PC-3 (cell line): ENCODE measurements at regions of chr3 and their contacts with region 1.

Region 1: DNA sequence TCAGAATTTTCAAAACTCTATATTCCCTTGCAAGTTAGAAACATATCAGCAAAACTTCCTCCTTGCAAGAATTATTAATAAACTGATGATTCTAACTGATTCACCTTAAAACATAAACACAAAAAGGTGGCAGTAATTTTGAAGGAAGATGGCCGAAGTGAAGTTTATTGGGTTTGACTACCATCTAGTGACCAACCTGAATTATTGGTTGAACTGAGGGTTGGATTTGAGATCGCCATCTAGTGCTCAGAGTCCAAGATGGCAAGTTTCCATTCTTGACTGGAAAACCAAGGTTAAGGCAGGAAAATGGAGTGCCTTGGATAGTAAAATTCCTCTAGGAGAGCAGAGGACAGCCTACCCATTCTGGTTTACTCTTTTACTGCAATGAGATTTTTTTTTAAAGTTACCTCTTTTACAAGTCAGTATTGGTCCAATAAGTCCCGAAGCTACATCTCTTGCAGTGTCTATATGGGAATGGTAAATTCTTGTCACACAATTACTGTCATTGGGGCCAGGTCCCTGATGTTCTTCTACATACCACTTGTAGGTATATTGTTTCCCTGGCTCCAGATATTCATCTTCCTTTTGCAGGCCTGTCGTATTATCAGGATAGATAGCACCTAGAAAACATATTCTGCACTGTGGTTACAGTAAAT is 51.6 kb upstream of the CP start:
- DNase-seq: peak; percentile 94
- ATAC-seq: peak; percentile 29
- H3K4me3 ChIP-seq: no peak overlapping the region
- H3K27ac ChIP-seq: no peak overlapping the region
- H3K4me1 ChIP-seq: peaks cover 35% of the 10 kb centered on the region
- H3K27me3 ChIP-seq: no peaks in the 10 kb centered on the region
- CTCF ChIP-seq: peak; percentile 100

Region 2: GRCh38 chr3:148500881-148501280 is 772.3 kb before region 1 on chr3:
- CTCF ChIA-PET with region 1: no interaction called
- POLR2A ChIA-PET with region 1: no interaction called
- intact Hi-C with region 1: no loop called
- DNase-seq: no peak
- ATAC-seq: no peak
- H3K4me3 ChIP-seq: no peak overlapping the region
- H3K27ac ChIP-seq: no peak overlapping the region
- H3K4me1 ChIP-seq: no peaks in the 10 kb centered on the region
- H3K27me3 ChIP-seq: peaks cover 4% of the 10 kb centered on the region; the same call in 1 of the 2 replicates
- CTCF ChIP-seq: no peak

Region 3: GRCh38 chr3:148991194-148992026 is 281.8 kb before region 1 on chr3 and contains the start of gene GYG1:
- CTCF ChIA-PET with region 1: no interaction called
- POLR2A ChIA-PET with region 1: no interaction called
- intact Hi-C with region 1: loop called (anchors 1 kb)
- DNase-seq: peak; percentile 82
- ATAC-seq: peak; percentile 87
- H3K4me3 ChIP-seq: peak within 1 kb of the TSS; percentile 92
- H3K27ac ChIP-seq: peak within 1 kb of the TSS; percentile 31; the same call in 1 of the 2 replicates
- H3K4me1 ChIP-seq: peaks cover 14% of the 10 kb centered on the region
- H3K27me3 ChIP-seq: no peaks in the 10 kb centered on the region
- CTCF ChIP-seq: peak; percentile 60
- total RNA-seq, gene GYG1: 9.9 and 12.0 TPM in 2 replicates

Region 4: DNA sequence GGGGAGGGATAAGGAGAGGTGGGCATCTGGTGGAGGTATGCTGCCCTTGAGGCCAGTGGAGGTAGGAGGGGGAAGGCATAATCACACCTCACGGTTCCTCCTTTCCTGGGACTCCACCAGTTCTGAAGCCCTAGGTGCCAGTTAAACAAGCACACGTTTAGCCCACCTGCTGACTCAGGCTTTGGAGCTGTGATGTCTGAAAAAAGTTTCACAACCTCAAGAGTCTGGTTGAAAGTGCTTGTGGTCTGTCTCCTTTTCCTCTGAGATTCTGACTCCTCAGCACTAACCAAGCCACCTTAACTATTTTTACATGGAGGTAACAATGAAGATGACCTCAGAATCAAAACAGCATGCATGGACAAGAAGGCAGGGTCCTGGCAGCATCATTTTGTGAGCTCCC is 120.8 kb before region 1 on chr3:
- CTCF ChIA-PET with region 1: no interaction called
- POLR2A ChIA-PET with region 1: no interaction called
- intact Hi-C with region 1: no loop called
- DNase-seq: no peak
- ATAC-seq: no peak
- H3K4me3 ChIP-seq: no peak overlapping the region
- H3K27ac ChIP-seq: no peak overlapping the region
- H3K4me1 ChIP-seq: peaks cover 9% of the 10 kb centered on the region; the same call in 1 of the 2 replicates
- H3K27me3 ChIP-seq: no peaks in the 10 kb centered on the region
- CTCF ChIP-seq: no peak

Region 5: GRCh38 chr3:149174901-149175300 is 98.3 kb before region 1 on chr3:
- CTCF ChIA-PET with region 1: no interaction called
- POLR2A ChIA-PET with region 1: no interaction called
- intact Hi-C with region 1: loop called (anchors 1 kb)
- DNase-seq: peak; percentile 22
- ATAC-seq: peak; percentile 49
- H3K4me3 ChIP-seq: no peak overlapping the region
- H3K27ac ChIP-seq: peak overlapping the region; percentile 39
- H3K4me1 ChIP-seq: peaks cover 30% of the 10 kb centered on the region
- H3K27me3 ChIP-seq: no peaks in the 10 kb centered on the region
- CTCF ChIP-seq: no peak

Region 6: DNA sequence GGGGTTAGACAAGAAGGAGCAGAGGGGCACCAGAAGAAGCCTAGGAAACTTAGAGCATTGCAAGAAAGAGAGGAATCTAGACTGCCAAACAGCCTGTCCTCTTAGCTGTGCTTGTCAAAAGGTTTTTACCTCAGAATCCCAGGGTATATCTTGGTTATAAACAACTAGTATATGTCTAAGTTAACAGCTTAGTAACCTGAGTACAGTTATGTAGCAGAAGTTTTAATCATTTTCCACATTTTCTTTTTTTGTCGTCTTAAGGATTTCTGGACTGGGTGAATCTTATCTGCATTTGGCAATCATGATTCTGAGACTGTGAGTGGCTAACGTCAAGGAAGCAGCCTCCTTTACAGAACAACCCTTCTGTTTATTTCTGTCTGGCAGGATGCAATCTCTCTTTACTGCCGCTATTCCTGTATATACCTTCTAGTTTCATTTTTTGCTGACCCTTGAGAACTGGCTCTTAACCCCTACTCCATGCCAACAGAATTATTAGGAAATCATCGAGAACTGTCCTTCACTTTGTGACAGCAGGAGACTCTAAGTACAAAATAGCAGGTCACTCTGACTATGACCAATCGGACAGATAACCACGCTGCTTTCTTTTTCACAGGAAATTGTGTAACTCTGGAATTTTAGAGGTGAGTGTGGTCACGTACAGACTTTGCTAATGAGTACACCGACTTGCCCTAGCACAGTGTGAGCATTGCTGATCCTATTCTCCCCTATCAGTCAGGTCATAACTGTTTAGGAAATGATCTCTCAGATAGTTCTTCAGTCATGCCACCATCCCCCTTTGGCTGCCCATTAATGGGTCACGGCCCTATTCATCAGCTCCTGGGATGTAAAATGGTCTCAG is 48.3 kb before region 1 on chr3:
- CTCF ChIA-PET with region 1: no interaction called
- POLR2A ChIA-PET with region 1: no interaction called
- intact Hi-C with region 1: loop called (anchors 1 kb)
- DNase-seq: peak; percentile 73
- ATAC-seq: peak; percentile 81
- H3K4me3 ChIP-seq: peak overlapping the region; percentile 73
- H3K27ac ChIP-seq: peak overlapping the region; percentile 38
- H3K4me1 ChIP-seq: peaks cover 11% of the 10 kb centered on the region
- H3K27me3 ChIP-seq: no peaks in the 10 kb centered on the region
- CTCF ChIP-seq: no peak

Region 7: DNA sequence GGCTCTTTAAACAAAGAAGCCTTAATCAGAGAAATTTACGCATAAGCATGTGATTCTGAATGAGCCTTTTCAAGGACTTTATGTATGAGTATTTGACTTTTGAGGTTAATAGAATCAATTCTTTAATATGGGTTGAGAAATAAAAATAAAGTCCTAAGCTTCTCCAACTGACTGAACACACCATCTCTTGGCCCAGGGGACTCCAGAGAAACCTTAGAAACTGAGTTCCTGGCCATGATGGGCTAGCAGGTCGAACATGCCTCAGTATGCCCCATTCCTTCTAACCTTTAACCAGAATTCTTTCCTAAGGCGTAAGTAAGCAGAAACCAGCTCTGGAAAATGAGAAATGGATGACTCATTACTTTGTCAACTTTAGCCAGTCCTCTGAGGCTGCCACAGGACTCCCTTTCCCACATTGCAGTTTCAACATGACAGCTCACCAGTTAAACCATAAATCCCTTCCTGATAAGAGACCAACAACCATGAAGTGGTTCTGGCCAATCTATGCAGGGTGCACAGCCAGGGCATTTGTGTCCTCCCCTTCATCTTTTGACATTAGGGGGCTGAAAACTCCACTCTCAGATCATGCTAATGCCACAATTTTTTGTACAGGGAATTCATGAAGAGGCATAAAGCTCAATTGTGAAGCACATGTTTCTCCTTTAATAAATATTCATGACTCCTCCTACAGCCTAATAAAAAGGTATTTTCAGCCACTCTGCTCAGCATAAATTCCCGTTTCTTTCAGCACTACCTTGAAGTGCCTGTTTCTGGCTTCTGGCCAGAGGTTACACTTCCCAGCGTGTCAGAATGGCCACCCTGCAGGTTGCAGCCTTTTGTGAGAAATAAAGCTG is 26.9 kb after region 1 on chr3:
- CTCF ChIA-PET with region 1: no interaction called
- POLR2A ChIA-PET with region 1: interaction called, 5 read pairs
- intact Hi-C with region 1: loop called (anchors 1 kb)
- DNase-seq: peak; percentile 98
- ATAC-seq: peak; percentile 93
- H3K4me3 ChIP-seq: peak overlapping the region; percentile 35; the same call in 1 of the 2 replicates
- H3K27ac ChIP-seq: peak overlapping the region; percentile 98
- H3K4me1 ChIP-seq: peaks cover 48% of the 10 kb centered on the region
- H3K27me3 ChIP-seq: no peaks in the 10 kb centered on the region
- CTCF ChIP-seq: no peak

Region 8: DNA sequence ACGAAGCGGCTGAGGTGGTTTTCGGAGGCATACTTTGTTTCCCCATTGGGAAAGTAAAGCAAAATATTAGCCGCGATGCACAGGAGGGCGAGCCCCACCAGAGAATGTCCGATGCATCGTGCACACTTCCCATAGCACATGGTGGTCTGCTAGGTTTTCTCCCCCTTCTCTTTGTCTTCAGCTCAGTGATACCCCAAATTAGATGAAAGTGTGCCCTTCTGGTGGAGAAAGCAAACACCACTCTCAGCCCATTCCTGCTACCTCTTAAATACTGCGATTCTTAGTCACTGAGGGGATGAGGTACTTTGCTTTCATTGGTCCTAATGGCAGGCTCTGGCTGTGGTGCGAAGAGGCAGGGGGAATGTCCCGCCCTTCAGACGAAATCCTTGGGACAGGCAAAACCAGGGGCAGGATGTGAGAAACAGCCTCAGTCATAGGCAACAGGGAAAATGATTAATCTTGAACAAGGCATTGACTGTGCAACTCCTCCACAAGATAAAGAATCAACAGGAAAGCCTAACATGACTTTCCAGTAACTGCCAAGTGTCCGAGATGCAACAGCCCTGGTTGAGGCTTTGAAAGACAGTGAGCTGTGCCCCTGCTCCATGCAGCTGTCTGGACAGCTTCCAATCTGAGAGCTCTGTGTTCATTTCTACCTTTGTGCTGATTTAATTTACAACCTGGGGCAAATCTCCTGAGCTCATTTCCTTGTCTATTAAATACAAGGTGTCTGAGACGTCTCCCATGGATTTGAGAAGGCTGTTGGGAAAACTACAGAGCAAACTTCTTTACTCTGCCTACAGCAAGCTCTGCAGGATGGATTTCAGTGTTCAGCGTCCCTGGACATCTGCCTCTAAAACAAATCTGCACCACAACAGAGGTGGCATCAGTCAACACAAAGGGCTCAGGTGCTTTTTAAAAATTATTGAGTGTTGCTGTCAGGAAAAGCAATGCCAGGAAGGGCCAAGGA is 104.5 kb after region 1 on chr3 and contains the start of gene TM4SF1:
- CTCF ChIA-PET with region 1: interaction called, 4 read pairs
- POLR2A ChIA-PET with region 1: interaction called, 4 read pairs
- intact Hi-C with region 1: loop called (anchors 5 kb)
- DNase-seq: peak; percentile 98
- ATAC-seq: peak; percentile 80
- H3K4me3 ChIP-seq: peak within 1 kb of the TSS; percentile 90
- H3K27ac ChIP-seq: peak within 1 kb of the TSS; percentile 99
- H3K4me1 ChIP-seq: peaks cover 63% of the 10 kb centered on the region
- H3K27me3 ChIP-seq: no peaks in the 10 kb centered on the region
- CTCF ChIP-seq: no peak
- total RNA-seq, gene TM4SF1: 408 and 535 TPM in 2 replicates

Region 9: GRCh38 chr3:149480325-149481017 is 207.2 kb after region 1 on chr3:
- CTCF ChIA-PET with region 1: no interaction called
- POLR2A ChIA-PET with region 1: no interaction called
- intact Hi-C with region 1: loop called (anchors 1 kb)
- DNase-seq: peak; percentile 94
- ATAC-seq: peak; percentile 96
- H3K4me3 ChIP-seq: no peak overlapping the region
- H3K27ac ChIP-seq: peak overlapping the region; percentile 55
- H3K4me1 ChIP-seq: peaks cover 17% of the 10 kb centered on the region
- H3K27me3 ChIP-seq: no peaks in the 10 kb centered on the region
- CTCF ChIP-seq: peak; percentile 98